A673 (cell line): ENCODE measurements at regions of chr9 and their contacts with region 1.

Region 1: DNA sequence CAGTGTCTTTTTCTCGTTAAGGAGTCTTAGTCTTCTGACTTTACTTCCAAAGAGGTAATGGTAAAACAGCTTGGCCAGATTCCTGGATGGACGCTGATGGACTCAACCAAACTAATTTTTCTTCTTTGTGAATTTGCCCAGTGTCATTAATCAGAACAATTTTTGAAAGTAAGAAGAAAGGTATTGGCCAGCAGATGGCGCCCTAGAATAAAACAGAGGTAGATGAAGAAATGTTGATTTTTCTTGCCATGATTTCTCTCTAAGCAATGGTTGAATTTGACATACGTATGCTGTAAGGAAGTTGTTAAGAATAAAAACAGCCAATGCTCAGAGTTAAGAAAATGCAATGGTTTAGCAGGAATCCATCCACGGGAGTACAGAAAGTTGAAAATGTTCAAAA is 500.0 kb downstream of the DIRAS2 start:
- DNase-seq: peak; percentile 67
- H3K4me3 ChIP-seq: no peak overlapping the region
- H3K27ac ChIP-seq: no peak overlapping the region
- H3K4me1 ChIP-seq: no peaks in the 10 kb centered on the region
- H3K27me3 ChIP-seq: no peaks in the 10 kb centered on the region
- CTCF ChIP-seq: peak; percentile 71

Region 2: GRCh38 chr9:90219548-90220118 is 77.1 kb after region 1 on chr9:
- CTCF ChIA-PET with region 1: no interaction called
- POLR2A ChIA-PET with region 1: no interaction called
- intact Hi-C with region 1: loop called (anchors 1 kb)
- DNase-seq: peak; percentile 34
- H3K4me3 ChIP-seq: no peak overlapping the region
- H3K27ac ChIP-seq: no peak overlapping the region
- H3K4me1 ChIP-seq: no peaks in the 10 kb centered on the region
- H3K27me3 ChIP-seq: no peaks in the 10 kb centered on the region
- CTCF ChIP-seq: peak; percentile 65

Region 3: DNA sequence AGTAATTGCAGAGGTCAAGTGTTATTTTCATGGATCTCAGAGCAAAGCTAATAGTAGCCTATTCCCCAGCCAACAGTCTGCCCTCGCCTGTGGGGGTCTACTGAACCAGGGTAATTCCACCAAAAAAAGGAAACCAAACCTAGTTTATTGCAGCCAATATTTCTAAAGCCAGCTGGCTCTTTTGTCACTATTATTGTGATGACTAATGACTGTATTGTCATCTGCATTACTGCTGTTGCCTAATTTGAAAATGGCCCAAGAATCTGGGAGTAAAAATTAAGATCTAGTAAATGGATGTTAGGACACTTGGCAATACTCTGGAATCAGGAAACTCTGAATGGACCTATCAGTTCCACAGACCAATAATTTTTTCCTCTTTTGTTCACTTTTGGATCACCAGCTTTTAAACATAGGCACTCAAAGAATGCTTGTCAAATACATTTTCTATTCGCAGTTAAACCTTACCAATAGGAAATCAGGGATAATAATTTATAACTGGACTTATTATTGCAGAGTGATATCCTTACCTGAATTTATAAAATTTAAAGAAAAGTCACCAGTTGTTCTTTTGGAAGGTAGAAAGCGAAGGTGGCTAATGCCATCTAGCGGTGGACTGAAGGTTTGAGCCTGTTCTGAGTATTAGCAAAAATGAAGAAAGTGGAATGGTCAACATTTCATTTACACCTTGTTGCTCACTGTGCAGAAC is 728.2 kb after region 1 on chr9:
- CTCF ChIA-PET with region 1: interaction called, 3 read pairs
- POLR2A ChIA-PET with region 1: no interaction called
- intact Hi-C with region 1: loop called (anchors 2 kb)
- DNase-seq: peak; percentile 59
- H3K4me3 ChIP-seq: no peak overlapping the region
- H3K27ac ChIP-seq: no peak overlapping the region
- H3K4me1 ChIP-seq: peaks cover 5% of the 10 kb centered on the region
- H3K27me3 ChIP-seq: no peaks in the 10 kb centered on the region
- CTCF ChIP-seq: peak; percentile 89